BJ (cell line): ENCODE measurements at regions of chr2 and their contacts with region 1.

Region 1: DNA sequence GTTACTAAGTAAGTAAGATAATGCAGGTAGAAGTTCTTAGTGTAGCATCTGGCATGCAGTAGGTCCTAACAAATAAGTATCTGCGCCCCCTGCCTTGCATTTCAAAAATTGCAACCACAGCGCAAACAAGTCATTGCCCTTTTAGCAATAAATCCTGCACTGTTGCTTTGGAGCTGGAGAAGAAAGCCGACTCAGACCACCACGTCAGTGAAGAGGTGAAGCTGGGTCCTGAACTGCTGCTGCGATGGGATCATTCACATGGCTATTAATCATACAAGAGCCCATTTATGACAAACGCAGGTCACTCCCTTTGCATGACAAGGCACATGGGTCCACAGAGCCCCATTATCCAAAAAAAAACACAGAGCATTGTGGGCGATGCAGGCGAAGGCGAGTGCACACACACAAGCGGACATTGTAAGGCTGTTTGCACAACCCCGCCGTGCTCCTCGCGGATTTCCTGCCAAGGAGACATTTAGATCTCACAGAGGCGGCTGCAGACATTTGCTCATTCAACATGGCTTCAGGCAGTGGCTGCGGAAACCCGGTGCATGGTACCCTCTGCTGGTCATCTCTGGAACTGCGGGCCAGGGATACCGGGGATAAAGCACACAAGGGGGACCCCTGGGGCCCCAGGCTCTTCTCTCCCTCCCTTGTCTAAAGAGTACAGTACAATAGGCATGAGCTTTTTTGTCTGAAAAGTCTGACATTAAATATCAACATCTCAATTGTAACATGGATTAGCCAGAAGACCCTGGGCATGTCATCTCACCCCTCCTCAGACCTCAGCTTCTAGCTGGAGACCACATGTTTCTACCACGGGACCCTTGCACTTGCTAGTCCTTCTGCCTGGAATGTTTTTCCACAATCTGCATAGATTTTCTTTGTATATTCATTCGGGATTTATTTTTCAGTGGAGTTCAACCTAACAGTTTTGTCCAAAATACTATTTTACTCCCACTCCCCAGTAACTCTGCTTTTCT is 56.7 kb downstream of the CYRIA start:
- DNase-seq: peak; percentile 6
- H3K4me3 ChIP-seq: peak overlapping the region; percentile 13
- H3K27me3 ChIP-seq: no peaks in the 10 kb centered on the region
- CTCF ChIP-seq: peak; percentile 97

Region 2: DNA sequence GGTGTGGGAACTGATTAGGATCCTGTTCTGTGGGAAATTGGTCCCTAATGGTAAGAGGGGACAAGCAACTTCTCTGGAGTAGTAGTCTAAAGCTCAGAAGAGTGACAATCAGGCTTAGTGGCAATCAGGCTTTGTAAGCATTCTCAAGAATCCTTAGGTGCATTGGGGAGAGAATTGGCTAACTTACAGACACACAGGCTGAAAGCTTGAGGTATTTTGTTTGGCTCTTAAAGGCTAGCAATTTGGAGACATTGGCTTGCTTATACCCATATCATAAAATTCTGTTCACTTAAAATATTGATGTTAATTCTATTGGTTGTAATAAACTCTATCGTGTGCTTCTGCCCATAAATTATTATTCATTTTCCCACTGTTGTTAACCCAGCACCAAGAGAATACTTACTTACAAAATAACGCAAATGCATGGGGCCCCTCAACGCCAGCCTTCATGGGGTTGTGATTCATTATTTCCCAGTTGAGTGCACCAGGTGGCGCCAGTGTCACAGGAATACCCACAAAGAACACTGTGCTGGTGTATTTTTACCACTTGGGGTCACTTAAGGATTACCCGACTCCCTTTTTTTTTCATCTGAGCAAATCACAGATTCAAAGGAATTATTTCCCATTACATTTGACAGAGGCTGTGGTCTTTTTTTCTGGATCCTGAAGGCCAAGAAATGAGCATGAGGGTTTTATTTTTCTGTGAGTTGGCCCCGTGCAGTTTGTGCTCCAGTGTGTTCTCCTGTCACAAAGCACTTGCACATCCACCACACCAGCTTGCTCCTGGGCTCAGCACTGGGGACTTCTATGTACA is 971.8 kb before region 1 on chr2:
- CTCF ChIA-PET with region 1: interaction called, 54 read pairs
- POLR2A ChIA-PET with region 1: no interaction called
- DNase-seq: no peak
- H3K4me3 ChIP-seq: no peak overlapping the region
- H3K27me3 ChIP-seq: no peaks in the 10 kb centered on the region
- CTCF ChIP-seq: peak; percentile 81

Region 3: DNA sequence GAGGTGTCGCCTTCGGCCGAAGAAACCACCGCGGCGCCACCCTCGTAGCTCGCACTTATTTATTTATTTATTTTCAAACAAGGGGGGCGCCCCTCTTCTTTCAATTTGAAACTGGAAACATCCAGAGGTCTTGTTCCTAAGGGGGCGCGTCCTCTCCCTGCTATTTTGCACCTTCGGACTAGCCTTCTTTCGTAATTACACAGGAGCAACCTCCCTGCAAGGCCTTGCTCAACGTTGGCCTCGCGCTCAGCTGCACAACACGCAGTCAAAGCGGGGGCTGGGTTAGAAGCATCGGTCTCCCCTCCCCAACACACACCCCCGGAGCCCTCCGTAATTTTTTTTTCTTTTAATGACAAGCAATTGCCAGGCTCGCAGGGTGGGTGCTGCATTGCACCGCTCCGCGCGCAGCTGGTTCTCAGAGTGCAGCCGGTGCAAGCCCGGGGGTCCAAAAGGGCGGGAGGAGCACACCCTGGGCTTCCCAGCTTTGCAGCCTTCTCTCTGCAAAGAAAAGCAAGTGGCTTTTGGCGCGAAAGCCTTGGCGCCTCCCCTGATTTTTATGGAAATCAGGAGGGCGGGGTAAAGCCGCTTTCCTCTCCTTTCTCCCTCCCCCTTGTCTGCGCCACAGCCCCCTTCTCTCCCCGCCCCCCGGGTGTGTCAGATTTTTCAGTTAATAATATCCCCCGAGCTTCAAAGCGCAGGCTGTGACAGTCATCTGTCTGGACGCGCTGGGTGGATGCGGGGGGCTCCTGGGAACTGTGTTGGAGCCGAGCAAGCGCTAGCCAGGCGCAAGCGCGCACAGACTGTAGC is 668.9 kb before region 1 on chr2 and contains the start of gene MYCN:
- CTCF ChIA-PET with region 1: interaction called, 14 read pairs
- POLR2A ChIA-PET with region 1: no interaction called
- DNase-seq: no peak
- H3K4me3 ChIP-seq: no peak within 1 kb of the TSS
- H3K27me3 ChIP-seq: peaks cover 25% of the 10 kb centered on the region
- CTCF ChIP-seq: 0 out of 2 replicates have a peak, but pooled peaks have one; percentile 57
- polyA plus RNA-seq, gene MYCN: not detected in 2 replicates

Region 4: DNA sequence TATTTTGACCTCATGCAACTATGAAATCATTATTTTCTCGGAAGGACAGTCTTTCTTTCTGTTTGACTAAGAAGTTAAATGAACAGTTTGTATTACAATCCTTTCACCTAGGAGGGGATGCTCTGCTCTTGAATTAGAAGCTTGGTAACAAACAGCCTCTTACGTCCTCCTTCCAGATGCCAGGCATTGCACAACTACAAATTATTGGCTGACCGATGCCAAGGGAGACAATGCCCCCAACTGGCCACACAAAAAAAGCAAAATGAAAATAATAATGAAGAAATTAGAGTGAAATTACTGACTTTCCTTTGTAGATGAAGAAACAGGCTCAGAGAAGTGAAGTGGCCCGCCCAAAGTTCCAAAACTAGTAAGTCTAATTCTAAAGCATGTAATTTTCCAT is 121.3 kb before region 1 on chr2:
- CTCF ChIA-PET with region 1: no interaction called
- POLR2A ChIA-PET with region 1: no interaction called
- DNase-seq: no peak
- H3K4me3 ChIP-seq: no peak overlapping the region
- H3K27me3 ChIP-seq: no peaks in the 10 kb centered on the region
- CTCF ChIP-seq: no peak

Region 5: DNA sequence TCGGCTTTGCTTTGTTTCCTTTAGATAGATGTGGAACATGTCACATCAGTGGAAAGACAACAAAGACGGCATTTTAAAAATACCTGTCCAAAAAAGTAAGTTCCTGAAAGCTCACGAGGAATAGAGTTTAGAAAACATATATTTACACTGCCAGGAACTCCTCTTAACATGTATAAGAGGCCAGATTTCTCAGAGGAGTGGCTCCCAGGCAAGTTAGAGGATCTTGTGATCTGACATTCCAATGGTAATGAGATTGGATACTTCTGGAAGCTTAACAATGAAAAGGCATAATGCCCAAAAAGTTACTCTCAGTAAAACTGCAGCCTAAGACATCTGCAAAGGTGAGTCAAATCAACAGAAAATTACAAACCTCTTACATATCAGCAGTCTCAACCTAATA is 20.4 kb before region 1 on chr2:
- CTCF ChIA-PET with region 1: no interaction called
- POLR2A ChIA-PET with region 1: no interaction called
- DNase-seq: no peak
- H3K4me3 ChIP-seq: no peak overlapping the region
- H3K27me3 ChIP-seq: no peaks in the 10 kb centered on the region
- CTCF ChIP-seq: no peak

Region 6: GRCh38 chr2:16623031-16623430 is 14.1 kb after region 1 on chr2:
- CTCF ChIA-PET with region 1: interaction called, 12 read pairs
- POLR2A ChIA-PET with region 1: no interaction called
- DNase-seq: no peak
- H3K4me3 ChIP-seq: no peak overlapping the region
- H3K27me3 ChIP-seq: no peaks in the 10 kb centered on the region
- CTCF ChIP-seq: no peak

Region 7: GRCh38 chr2:16682431-16683118 is 73.6 kb after region 1 on chr2:
- CTCF ChIA-PET with region 1: no interaction called
- POLR2A ChIA-PET with region 1: no interaction called
- DNase-seq: no peak
- H3K4me3 ChIP-seq: no peak overlapping the region
- H3K27me3 ChIP-seq: no peaks in the 10 kb centered on the region
- CTCF ChIP-seq: no peak

Region 8: GRCh38 chr2:16773080-16773713 is 164.2 kb after region 1 on chr2:
- CTCF ChIA-PET with region 1: no interaction called
- POLR2A ChIA-PET with region 1: no interaction called
- DNase-seq: no peak
- H3K4me3 ChIP-seq: no peak overlapping the region
- H3K27me3 ChIP-seq: no peaks in the 10 kb centered on the region
- CTCF ChIP-seq: peak; percentile 30